PC-9 (cell line): ENCODE measurements at regions of chr3 and their contacts with region 1.

Region 1: DNA sequence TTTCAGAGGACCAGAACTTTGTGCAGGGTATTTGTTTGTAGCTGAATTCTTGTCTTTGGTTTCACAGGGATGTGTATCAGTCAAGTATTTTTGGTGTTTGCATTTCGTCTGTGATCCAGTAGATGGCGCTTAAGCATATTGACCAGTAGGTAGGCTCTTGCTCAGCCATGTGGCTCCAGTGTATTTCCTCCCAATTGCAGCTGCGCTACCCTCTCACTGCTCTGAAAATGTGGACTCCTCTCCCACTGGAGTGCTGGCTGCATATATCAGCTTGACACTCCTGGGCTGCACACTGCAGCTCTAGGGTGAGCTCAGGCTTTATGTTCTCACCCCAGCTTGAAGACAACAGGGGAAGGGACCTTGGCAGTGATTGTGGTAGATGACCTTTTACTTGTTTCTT is 1264.3 kb upstream of the ALCAM start:
- DNase-seq: peak in 1 of 2 experiments; percentile 21
- H3K4me3 ChIP-seq: no peak overlapping the region
- H3K27ac ChIP-seq: no peak overlapping the region
- H3K4me1 ChIP-seq: no peaks in the 10 kb centered on the region
- H3K27me3 ChIP-seq: no peaks in the 10 kb centered on the region
- CTCF ChIP-seq: peak; percentile 85

Region 2: DNA sequence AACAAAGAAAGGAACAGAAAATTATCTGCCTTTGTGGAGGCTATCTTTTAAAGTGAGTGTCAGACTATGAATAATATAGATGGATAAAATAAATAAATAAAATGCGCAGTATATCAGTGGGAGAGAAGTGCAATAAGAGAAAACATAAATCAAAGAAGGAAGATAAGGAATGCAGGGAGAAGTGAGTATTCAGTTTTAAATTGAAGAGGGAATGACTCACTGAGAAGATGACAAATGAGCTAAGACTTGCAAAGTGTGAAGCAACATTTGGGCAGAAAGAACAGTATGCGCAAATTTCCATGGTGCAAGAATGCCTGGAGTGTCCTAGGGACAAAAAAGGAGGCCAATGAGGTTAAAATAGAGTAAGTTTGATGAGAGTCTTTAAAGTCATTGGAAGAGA is 35.7 kb before region 1 on chr3:
- CTCF ChIA-PET with region 1: no interaction called
- POLR2A ChIA-PET with region 1: no interaction called
- intact Hi-C with region 1: no loop called
- DNase-seq: no peak
- H3K4me3 ChIP-seq: no peak overlapping the region
- H3K27ac ChIP-seq: no peak overlapping the region
- H3K4me1 ChIP-seq: no peaks in the 10 kb centered on the region
- H3K27me3 ChIP-seq: no peaks in the 10 kb centered on the region
- CTCF ChIP-seq: no peak

Region 3: DNA sequence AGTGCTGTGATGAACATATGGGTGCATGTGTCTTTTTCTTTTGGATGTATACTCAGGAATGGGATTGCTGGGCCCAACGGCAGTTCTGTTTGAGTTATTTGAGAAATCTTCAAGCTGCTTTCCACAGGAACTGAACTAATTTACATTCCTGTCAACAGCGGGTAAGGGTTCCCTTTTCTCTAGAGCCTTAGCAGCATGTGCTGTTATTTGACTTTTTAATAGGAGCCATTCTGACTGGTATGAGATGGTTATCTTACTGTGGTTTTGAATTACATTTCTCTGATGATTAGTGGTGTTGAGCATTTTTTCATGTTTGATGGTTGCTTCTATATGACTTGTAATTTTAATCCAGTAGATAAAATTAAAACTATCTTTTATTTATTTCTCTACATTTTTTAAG is 95.7 kb after region 1 on chr3:
- CTCF ChIA-PET with region 1: no interaction called
- POLR2A ChIA-PET with region 1: no interaction called
- intact Hi-C with region 1: no loop called
- DNase-seq: no peak
- H3K4me3 ChIP-seq: no peak overlapping the region
- H3K27ac ChIP-seq: no peak overlapping the region
- H3K4me1 ChIP-seq: no peaks in the 10 kb centered on the region
- H3K27me3 ChIP-seq: no peaks in the 10 kb centered on the region
- CTCF ChIP-seq: no peak

Region 4: DNA sequence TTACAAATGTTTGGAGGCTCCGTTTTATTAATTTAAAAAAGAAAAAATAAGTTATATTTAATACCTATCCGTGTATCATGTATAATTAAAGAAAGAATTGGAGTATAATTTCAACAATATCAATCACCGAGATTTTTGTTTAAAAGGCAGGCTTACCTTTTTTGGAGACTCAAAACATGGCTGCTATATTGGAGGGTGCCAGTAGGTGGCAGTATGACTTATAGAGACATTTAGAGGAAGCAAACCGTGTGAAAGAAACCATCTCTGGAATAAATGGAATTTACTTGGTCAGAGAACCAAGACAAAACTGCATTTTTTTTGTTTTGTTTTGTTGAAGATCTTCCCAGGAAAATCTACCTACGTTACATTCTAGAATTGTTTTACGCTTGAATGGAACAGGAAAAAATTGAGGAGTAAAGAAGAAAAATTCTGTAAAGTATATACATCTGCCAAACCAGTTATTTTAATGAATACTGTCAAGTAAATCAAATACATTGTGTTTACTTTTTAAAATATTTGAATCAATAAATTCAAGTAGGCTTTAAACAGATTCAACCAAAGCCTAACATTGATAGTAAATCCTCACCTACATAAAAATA is 461.8 kb after region 1 on chr3:
- CTCF ChIA-PET with region 1: interaction called, 11 read pairs
- POLR2A ChIA-PET with region 1: no interaction called
- intact Hi-C with region 1: no loop called
- DNase-seq: peak; percentile 41 to 66
- H3K4me3 ChIP-seq: no peak overlapping the region
- H3K27ac ChIP-seq: no peak overlapping the region
- H3K4me1 ChIP-seq: no peaks in the 10 kb centered on the region
- H3K27me3 ChIP-seq: no peaks in the 10 kb centered on the region
- CTCF ChIP-seq: peak; percentile 96